ENCODE measurements at regions of chr10 and their contacts with region 1.

Region 1: GRCh38 chr10:7275761-7276440 is 134.9 kb downstream of the SFMBT2 start:
- DNase-seq: peak in 2 of 10 donors; percentile 19 to 50
- H3K4me3 ChIP-seq: no peak overlapping the region
- H3K27ac ChIP-seq: no peak overlapping the region
- H3K27me3 ChIP-seq: no peaks in the 10 kb centered on the region
- CTCF ChIP-seq: no peak

Region 2: GRCh38 chr10:6995831-6996230 is 280.1 kb before region 1 on chr10:
- intact Hi-C with region 1: no loop called
- DNase-seq: no peak
- H3K4me3 ChIP-seq: peak overlapping the region in 1 of 59 donors; percentile 8
- H3K27ac ChIP-seq: peak overlapping the region in 47 of 59 donors; percentile 18 to 99 (median 94)
- H3K27me3 ChIP-seq: peaks cover 0 to 4% (median 0%) of the 10 kb centered on the region in 45 donors
- CTCF ChIP-seq: no peak

Region 3: GRCh38 chr10:7133278-7133677 is 142.6 kb before region 1 on chr10:
- intact Hi-C with region 1: no loop called
- DNase-seq: no peak
- H3K4me3 ChIP-seq: no peak overlapping the region
- H3K27ac ChIP-seq: no peak overlapping the region
- H3K27me3 ChIP-seq: peaks cover 0 to 23% (median 0%) of the 10 kb centered on the region in 45 donors
- CTCF ChIP-seq: no peak

Region 4: GRCh38 chr10:7337431-7338171 is 61.7 kb after region 1 on chr10:
- intact Hi-C with region 1: loop called in 1 of 2 experiments (anchors 10 kb)
- DNase-seq: no peak
- H3K4me3 ChIP-seq: peak overlapping the region in 1 of 59 donors; percentile 3
- H3K27ac ChIP-seq: peak overlapping the region in 42 of 59 donors; percentile 4 to 84 (median 48)
- H3K27me3 ChIP-seq: no peaks in the 10 kb centered on the region
- CTCF ChIP-seq: no peak

Measured in dorsolateral prefrontal cortex (tissue), 120 donors.